ENCODE measurements at regions of chr12 and their contacts with region 1.

Region 1: DNA sequence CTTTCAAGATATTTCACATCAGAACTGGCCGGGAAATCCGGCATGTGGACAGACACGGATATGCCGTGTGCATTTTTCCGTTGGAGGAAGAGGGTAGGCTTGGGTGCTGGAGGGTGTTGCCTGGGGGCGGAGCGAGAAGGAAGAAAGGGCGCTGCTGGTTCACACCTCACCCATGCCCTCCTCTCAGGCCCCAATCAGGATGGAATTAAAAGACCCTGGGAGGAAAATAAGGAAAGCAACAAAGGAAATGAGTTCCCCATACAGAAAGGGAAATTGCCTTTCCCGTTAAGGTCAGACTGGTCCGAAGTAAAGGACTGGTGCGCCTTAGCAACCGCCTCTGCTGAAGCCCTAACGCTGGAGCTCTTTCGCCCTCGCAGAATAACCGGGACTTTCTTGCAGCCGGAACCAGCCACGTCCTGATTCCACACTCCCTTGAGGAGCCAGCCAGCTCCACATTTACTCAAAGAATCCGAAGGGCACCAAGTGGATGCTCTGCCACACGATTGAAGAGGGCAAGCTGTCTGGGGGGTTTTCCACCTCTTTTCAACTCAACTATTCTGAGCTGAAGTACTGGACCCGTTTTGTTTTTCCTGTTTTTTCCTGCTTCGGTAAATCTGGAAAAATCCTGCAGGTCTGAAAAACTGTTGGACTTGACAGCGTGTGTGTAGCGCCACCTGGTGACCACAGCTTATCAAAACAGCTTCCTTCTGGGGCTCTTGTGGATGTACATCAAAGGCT is 37.7 kb upstream of the BCL2L14 start:
- DNase-seq: peak; percentile 93
- ATAC-seq: peak; percentile 75
- H3K4me3 Mint-ChIP-seq: peak overlapping the region; percentile 61
- H3K27ac Mint-ChIP-seq: peak overlapping the region; percentile 64
- H3K4me1 Mint-ChIP-seq: peaks cover 11% of the 10 kb centered on the region
- H3K27me3 Mint-ChIP-seq: no peaks in the 10 kb centered on the region; the same call in 1 of the 2 replicates
- CTCF ChIP-seq: peak; percentile 90

Region 2: GRCh38 chr12:11500178-11500860 is 532.7 kb before region 1 on chr12:
- CTCF ChIA-PET with region 1: interaction called, 21 read pairs
- POLR2A ChIA-PET with region 1: no interaction called
- DNase-seq: peak; percentile 95
- ATAC-seq: peak; percentile 90
- H3K4me3 Mint-ChIP-seq: peak overlapping the region; percentile 55
- H3K27ac Mint-ChIP-seq: no peak overlapping the region
- H3K4me1 Mint-ChIP-seq: peaks cover 9% of the 10 kb centered on the region
- H3K27me3 Mint-ChIP-seq: peaks cover 53% of the 10 kb centered on the region
- CTCF ChIP-seq: no peak

Region 3: GRCh38 chr12:11553871-11554533 is 479.0 kb before region 1 on chr12:
- CTCF ChIA-PET with region 1: interaction called, 16 read pairs
- POLR2A ChIA-PET with region 1: no interaction called
- DNase-seq: peak; percentile 36
- ATAC-seq: peak; percentile 88
- H3K4me3 Mint-ChIP-seq: no peak overlapping the region
- H3K27ac Mint-ChIP-seq: no peak overlapping the region
- H3K4me1 Mint-ChIP-seq: peaks cover 7% of the 10 kb centered on the region
- H3K27me3 Mint-ChIP-seq: no peaks in the 10 kb centered on the region
- CTCF ChIP-seq: 0 out of 2 replicates have a peak, but pooled peaks have one; percentile 31

Region 4: DNA sequence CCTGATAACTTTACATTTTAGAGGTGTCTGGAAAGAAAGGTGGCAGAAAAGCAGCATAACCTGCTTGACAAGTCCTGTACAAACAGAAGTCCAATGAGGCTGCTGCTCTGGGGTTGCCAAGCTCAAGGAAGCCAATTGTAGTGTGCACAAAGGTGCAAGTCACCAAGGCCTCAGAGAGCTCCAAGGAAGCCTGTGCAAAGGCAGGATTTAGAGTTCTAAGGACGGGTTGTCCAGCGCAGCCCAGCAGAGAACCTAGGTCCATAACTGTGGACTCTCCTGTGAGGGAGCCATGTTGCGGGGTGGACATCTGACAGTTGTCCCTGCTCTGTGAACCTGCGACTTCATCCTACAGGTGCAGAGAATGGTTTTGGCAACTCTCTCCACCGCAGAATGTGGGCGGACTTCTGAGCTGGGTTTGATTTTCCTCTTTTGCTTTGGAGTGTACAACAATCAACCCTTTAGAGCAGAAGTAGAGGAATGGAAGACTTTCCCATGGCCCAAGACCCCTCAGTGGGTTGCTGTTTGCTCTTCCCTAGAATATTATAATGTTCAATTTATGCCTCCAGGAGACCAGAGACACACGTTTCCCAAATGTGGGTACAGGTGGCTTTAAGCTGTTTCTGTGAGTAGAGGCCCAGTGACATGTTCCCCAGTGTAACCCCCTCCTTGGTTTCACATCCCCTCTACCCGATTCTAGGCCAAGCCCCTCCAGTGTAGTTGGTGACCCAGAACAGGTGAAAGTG is 302.6 kb before region 1 on chr12:
- CTCF ChIA-PET with region 1: interaction called, 12 read pairs
- POLR2A ChIA-PET with region 1: no interaction called
- DNase-seq: no peak
- ATAC-seq: no peak
- H3K4me3 Mint-ChIP-seq: no peak overlapping the region
- H3K27ac Mint-ChIP-seq: no peak overlapping the region
- H3K4me1 Mint-ChIP-seq: peaks cover 43% of the 10 kb centered on the region
- H3K27me3 Mint-ChIP-seq: no peaks in the 10 kb centered on the region
- CTCF ChIP-seq: no peak

Region 5: DNA sequence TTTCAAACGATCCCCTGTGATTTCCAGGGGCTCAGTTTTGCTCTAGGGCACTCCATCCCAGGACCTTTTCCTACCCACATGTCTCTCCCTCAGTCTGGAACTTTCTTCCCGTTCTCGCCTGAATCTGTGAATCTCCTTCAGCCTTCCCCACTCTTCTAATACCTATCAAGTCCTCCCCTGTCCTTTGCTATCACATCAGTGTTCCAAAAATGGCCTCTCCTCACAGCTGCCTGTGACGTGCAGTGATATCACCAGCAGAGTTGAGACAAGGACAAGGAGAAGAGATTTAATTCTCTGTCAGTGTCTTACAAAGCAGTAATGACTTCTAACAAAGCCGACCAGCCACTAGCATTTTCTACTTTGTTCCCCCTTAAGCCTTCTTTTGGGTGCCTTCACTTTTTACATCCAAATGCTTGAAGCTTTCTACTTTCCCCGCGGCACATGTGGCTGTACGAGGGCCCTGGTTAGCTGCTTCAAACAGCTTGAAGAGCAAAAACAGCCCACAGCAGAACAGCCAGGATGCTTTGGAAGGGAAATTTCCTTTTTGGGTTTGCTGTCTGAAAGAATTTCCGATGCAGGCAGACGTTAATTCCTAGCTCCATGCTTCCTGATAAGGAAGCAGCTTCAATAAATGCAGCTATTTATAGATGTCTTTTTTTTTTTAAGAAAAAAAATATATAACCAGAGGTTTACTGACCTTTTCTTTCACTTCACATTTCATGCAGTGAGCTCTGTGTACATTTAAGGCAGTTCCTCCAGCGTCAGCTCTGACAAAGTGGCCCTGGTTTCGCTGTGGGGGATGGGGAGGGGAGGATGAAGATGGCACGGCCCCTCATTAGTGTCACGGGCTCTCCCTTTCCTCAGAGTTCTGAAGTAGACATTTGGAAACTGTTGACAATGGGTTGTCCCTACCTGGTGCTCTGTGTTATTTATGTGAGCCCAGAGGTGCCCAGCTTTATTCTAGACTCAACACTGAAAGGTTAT is 274.2 kb before region 1 on chr12:
- CTCF ChIA-PET with region 1: no interaction called
- POLR2A ChIA-PET with region 1: no interaction called
- DNase-seq: no peak
- ATAC-seq: no peak
- H3K4me3 Mint-ChIP-seq: no peak overlapping the region
- H3K27ac Mint-ChIP-seq: peak overlapping the region; percentile 33
- H3K4me1 Mint-ChIP-seq: peaks cover 35% of the 10 kb centered on the region
- H3K27me3 Mint-ChIP-seq: no peaks in the 10 kb centered on the region
- CTCF ChIP-seq: no peak

Region 6: GRCh38 chr12:12017798-12018197 is 15.2 kb before region 1 on chr12:
- CTCF ChIA-PET with region 1: interaction called, 18 read pairs
- POLR2A ChIA-PET with region 1: no interaction called
- DNase-seq: peak; percentile 61
- ATAC-seq: peak; percentile 90
- H3K4me3 Mint-ChIP-seq: no peak overlapping the region
- H3K27ac Mint-ChIP-seq: no peak overlapping the region
- H3K4me1 Mint-ChIP-seq: peaks cover 13% of the 10 kb centered on the region
- H3K27me3 Mint-ChIP-seq: no peaks in the 10 kb centered on the region
- CTCF ChIP-seq: no peak; the same call in 1 of the 2 replicates

Measured in WTC11 (cell line).